RWPE1 (cell line): ENCODE measurements at regions of chr4 and their contacts with region 1.

Region 1: GRCh38 chr4:84952009-84952408 is 14.5 kb downstream of the WDFY3 start:
- DNase-seq: peak; percentile 85
- H3K27ac ChIP-seq: no peak overlapping the region
- CTCF ChIP-seq: no peak

Region 2: GRCh38 chr4:84778041-84778440 is 174.0 kb before region 1 on chr4:
- CTCF ChIA-PET with region 1: no interaction called
- POLR2A ChIA-PET with region 1: interaction called, 21 read pairs
- DNase-seq: no peak
- H3K27ac ChIP-seq: no peak overlapping the region
- CTCF ChIP-seq: no peak